ENCODE measurements at regions of chr11 and their contacts with region 1.

Region 1: DNA sequence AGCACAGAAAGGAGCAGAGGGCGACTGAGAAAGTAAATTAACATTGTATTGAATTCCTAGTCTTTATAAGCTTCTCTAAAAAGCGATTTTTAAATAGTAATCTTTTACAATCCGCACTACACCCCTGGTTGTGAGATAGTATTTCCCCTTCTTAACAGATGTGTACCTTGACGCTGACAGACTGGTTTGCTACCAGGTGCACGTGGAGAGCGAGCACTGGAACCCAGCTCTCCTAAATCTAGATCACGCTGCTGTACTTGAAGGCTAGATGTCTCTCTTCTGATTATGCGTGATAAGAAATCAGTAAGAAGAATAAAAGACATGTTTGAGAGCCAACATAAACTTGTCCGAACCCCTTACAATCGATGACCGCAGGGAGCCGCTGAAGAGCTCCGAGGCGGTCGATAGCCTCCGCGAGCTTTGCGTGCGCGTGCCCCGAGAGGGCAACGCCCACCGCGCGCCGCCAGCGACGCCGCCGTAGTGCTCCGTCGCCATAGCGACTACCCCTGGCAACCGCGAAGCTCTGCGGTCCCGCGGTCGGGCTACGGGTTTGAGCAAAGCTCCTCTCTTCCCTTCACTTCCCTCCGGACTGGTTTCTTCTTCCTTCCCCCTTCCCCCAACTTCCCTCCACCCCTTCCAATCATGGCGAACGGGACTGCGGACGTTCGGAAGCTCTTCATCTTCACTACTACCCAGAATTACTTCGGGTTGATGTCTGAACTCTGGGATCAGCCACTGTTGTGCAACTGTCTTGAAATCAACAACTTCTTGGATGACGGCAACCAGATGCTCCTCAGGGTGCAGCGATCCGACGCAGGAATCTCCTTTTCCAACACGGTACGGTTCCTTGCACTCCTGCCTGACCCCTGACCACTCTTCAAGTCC is at the start of gene DYNC2H1:
- DNase-seq: peak; percentile 72
- ATAC-seq: peak; percentile 99
- H3K4me3 ChIP-seq: peak within 1 kb of the TSS; percentile 84 to 92
- H3K27ac ChIP-seq: peak within 1 kb of the TSS; percentile 91
- H3K4me1 ChIP-seq: peaks cover 6% of the 10 kb centered on the region; the same call in 1 of the 2 replicates
- H3K27me3 ChIP-seq: no peaks in the 10 kb centered on the region
- CTCF ChIP-seq: peak; percentile 86
- total RNA-seq, gene DYNC2H1: 12.4 TPM

Region 2: GRCh38 chr11:102950622-102951107 is 158.5 kb before region 1 on chr11:
- CTCF ChIA-PET with region 1: no interaction called
- POLR2A ChIA-PET with region 1: no interaction called
- in situ Hi-C with region 1: no loop called
- intact Hi-C with region 1: no loop called
- DNase-seq: no peak
- ATAC-seq: no peak
- H3K4me3 ChIP-seq: no peak overlapping the region
- H3K27ac ChIP-seq: no peak overlapping the region
- H3K4me1 ChIP-seq: no peaks in the 10 kb centered on the region
- H3K27me3 ChIP-seq: no peaks in the 10 kb centered on the region; the same call in 1 of the 2 replicates
- CTCF ChIP-seq: no peak

Region 3: DNA sequence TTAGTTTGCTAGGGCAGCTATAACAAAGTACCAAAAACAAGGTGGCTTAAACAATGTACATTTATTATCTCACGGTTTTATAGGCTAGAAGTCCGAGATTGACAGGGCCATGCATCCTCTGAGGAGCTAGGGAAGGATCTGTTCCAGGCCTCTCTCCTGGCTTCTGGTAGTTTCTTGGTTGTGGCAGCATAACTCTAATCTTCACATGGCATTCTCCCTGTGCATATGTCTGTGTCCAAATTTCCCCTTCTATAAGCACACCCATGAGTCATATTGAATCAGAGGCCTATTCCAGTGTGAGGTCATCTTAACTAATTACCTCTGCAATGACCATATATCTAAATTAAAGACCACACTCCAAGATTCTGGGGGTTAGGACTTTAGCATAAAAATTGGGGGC is 122.4 kb before region 1 on chr11:
- CTCF ChIA-PET with region 1: no interaction called
- POLR2A ChIA-PET with region 1: no interaction called
- in situ Hi-C with region 1: no loop called
- intact Hi-C with region 1: no loop called
- DNase-seq: no peak
- ATAC-seq: no peak
- H3K4me3 ChIP-seq: no peak overlapping the region
- H3K27ac ChIP-seq: no peak overlapping the region
- H3K4me1 ChIP-seq: no peaks in the 10 kb centered on the region
- H3K27me3 ChIP-seq: peaks cover 3% of the 10 kb centered on the region; the same call in 1 of the 2 replicates
- CTCF ChIP-seq: no peak

Region 4: GRCh38 chr11:103091801-103092524 is 17.2 kb before region 1 on chr11 and contains the start of gene DCUN1D5:
- CTCF ChIA-PET with region 1: interaction called, 4 read pairs
- POLR2A ChIA-PET with region 1: interaction called, 14 read pairs
- in situ Hi-C with region 1: no loop called
- intact Hi-C with region 1: no loop called
- DNase-seq: peak; percentile 88
- ATAC-seq: peak; percentile 99
- H3K4me3 ChIP-seq: peak within 1 kb of the TSS; percentile 86 to 93
- H3K27ac ChIP-seq: peak within 1 kb of the TSS; percentile 97
- H3K4me1 ChIP-seq: peaks cover 17% of the 10 kb centered on the region
- H3K27me3 ChIP-seq: peaks cover 2% of the 10 kb centered on the region; the same call in 1 of the 2 replicates
- CTCF ChIP-seq: no peak
- total RNA-seq, gene DCUN1D5: 68.3 TPM